Panc1 (cell line): ENCODE measurements at regions of chr1 and their contacts with region 1.

Region 1: GRCh38 chr1:63327417-63328139 is 5.2 kb downstream of the FOXD3 start:
- DNase-seq: peak; percentile 41
- ATAC-seq: peak; percentile 92
- H3K4me3 ChIP-seq: peak overlapping the region in 1 of 2 experiments; percentile 34; a peak in 2 of 4 replicates
- H3K27ac ChIP-seq: no peak overlapping the region
- H3K4me1 ChIP-seq: no peaks in the 10 kb centered on the region
- H3K27me3 ChIP-seq: peaks cover 9% of the 10 kb centered on the region
- CTCF ChIP-seq: peak; percentile 95

Region 2: DNA sequence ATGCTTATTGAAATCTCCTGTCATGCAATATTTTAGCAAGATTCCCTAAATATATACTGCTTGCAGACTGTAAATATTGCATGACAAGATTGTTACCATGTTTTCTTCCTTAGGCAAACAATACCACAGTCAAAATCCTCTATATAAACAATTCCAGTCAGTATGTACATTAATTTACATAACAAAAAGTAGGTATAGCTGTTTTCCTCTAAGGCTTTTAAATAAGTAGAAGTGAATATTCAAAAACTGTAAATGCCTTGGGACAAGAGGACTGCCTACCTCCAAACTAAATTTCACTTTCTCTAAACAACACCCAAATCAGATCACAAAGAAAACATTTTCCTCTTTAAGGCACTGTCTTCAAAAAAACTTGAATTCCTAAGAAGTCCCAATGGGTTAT is 22.5 kb before region 1 on chr1:
- CTCF ChIA-PET with region 1: no interaction called
- POLR2A ChIA-PET with region 1: no interaction called
- in situ Hi-C with region 1: no loop called
- intact Hi-C with region 1: no loop called
- DNase-seq: no peak
- ATAC-seq: no peak
- H3K4me3 ChIP-seq: no peak overlapping the region
- H3K27ac ChIP-seq: no peak overlapping the region
- H3K4me1 ChIP-seq: no peaks in the 10 kb centered on the region
- H3K27me3 ChIP-seq: no peaks in the 10 kb centered on the region
- CTCF ChIP-seq: no peak

Region 3: DNA sequence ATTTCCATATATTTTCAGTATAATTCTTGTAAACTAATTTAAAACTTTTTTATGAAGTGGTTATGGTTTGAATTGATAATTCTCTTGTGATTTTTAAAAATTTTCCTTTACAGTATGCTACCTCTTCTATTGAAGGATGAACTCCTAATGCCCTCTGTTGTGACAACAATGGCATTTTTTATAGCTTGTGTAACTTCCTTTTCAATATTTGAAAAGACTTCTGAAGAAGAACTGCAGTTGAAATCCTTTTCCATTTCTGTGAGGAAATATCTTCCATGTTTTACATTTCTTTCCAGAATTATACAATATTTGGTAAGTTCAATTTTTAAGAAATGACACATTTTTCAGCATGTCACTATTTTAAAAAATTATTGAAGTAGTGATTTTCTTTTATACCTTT is 101.2 kb after region 1 on chr1:
- CTCF ChIA-PET with region 1: no interaction called
- POLR2A ChIA-PET with region 1: no interaction called
- in situ Hi-C with region 1: no loop called
- intact Hi-C with region 1: no loop called
- DNase-seq: no peak
- ATAC-seq: no peak
- H3K4me3 ChIP-seq: no peak overlapping the region
- H3K27ac ChIP-seq: no peak overlapping the region
- H3K4me1 ChIP-seq: no peaks in the 10 kb centered on the region; the same call in 1 of the 2 replicates
- H3K27me3 ChIP-seq: no peaks in the 10 kb centered on the region
- CTCF ChIP-seq: no peak

Region 4: DNA sequence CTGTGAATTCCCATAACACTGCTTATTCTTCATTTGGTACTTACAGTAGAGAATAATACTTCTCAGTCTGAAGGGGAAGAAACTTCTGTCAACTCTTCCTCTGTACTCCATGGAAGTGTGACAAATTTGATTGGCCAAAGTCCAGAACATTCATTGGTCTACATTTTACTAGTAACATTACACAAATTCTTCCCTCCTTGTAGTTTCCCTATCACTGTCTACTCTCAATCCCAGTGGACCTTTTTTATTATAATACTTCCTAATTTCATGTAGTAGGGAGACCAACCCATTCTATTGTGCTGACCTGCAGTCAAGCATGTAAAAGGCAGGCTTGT is 114.5 kb after region 1 on chr1:
- CTCF ChIA-PET with region 1: no interaction called
- POLR2A ChIA-PET with region 1: no interaction called
- in situ Hi-C with region 1: no loop called
- intact Hi-C with region 1: loop called (anchors 5 kb)
- DNase-seq: no peak
- ATAC-seq: 0 out of 2 replicates have a peak, but pooled peaks have one; percentile 37
- H3K4me3 ChIP-seq: no peak overlapping the region
- H3K27ac ChIP-seq: no peak overlapping the region
- H3K4me1 ChIP-seq: no peaks in the 10 kb centered on the region
- H3K27me3 ChIP-seq: no peaks in the 10 kb centered on the region
- CTCF ChIP-seq: no peak

Region 5: GRCh38 chr1:63454269-63454668 is 126.7 kb after region 1 on chr1:
- CTCF ChIA-PET with region 1: no interaction called
- POLR2A ChIA-PET with region 1: no interaction called
- in situ Hi-C with region 1: no loop called
- intact Hi-C with region 1: no loop called
- DNase-seq: no peak
- ATAC-seq: no peak
- H3K4me3 ChIP-seq: no peak overlapping the region
- H3K27ac ChIP-seq: no peak overlapping the region
- H3K4me1 ChIP-seq: no peaks in the 10 kb centered on the region
- H3K27me3 ChIP-seq: no peaks in the 10 kb centered on the region
- CTCF ChIP-seq: peak; percentile 38; the same call in 1 of the 2 replicates

Region 6: DNA sequence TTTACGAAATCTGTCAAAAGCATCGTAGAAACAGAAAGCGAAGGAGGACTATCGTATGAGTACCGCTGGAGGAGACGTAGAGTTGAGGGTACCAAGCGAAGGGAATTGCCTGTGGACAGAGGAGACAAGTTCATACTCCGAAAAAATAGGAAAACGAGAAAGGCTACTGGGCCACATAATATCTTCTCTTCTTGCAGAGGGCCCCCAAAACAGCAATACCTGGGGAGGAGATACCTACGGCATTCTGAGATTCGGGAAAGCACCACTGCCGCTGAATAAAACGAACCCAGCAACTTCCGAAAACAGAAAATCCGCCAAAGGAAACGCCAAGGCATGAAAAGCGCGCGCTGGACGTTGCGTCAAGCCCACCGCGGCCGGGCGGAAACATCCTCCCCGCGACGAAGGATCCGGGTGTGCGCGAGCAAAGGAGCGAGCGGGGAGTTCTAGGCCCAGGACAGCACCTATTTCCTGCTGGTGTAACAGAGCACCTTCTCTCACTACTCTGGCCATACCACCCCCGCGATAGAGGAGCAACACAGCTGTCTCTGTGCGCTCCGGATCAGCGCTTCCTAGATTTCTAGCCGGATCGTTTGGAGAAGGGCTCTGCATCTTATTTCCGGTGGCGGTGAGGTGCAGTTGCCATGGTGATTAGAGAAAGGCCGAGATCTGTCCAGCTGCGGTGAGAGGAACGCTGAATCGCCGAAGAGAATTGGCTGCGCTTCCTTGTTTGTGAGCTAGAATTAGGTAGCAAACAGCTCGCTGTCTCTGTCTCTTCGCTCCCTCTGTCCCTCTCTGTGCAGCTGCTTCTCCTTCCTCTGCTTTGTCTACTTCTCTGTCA is 195.5 kb after region 1 on chr1 and contains the starts of genes EFCAB7 and ITGB3BP:
- CTCF ChIA-PET with region 1: no interaction called
- POLR2A ChIA-PET with region 1: no interaction called
- in situ Hi-C with region 1: no loop called
- intact Hi-C with region 1: loop called (anchors 5 kb)
- DNase-seq: peak; percentile 76
- ATAC-seq: peak; percentile 95
- H3K4me3 ChIP-seq: peak within 1 kb of the TSS; percentile 88 to 92
- H3K27ac ChIP-seq: peak within 1 kb of the TSS; percentile 95
- H3K4me1 ChIP-seq: peaks cover 17% of the 10 kb centered on the region
- H3K27me3 ChIP-seq: no peaks in the 10 kb centered on the region
- CTCF ChIP-seq: no peak
- total RNA-seq, gene EFCAB7: 6.6 TPM
- total RNA-seq, gene ITGB3BP: 31.9 TPM

Region 7: DNA sequence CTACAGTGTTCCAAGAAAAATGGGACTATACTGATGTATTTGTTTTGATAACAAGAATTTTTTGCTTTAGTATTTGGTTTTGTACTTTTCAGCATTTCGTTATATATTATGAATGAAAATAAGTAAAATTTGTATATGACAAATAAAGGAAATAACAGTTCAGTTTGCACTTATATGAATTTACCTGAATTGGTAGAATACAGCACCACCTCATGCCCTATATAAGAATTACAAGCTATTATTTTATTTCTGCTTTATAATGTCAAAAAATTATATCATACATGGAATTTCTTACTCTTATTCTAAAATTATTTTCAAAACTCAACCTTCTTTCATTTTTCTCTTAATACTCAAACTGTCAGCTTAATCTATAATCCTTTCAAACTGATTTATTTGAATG is 210.4 kb after region 1 on chr1:
- CTCF ChIA-PET with region 1: no interaction called
- POLR2A ChIA-PET with region 1: no interaction called
- in situ Hi-C with region 1: no loop called
- intact Hi-C with region 1: loop called (anchors 5 kb)
- DNase-seq: no peak
- ATAC-seq: no peak
- H3K4me3 ChIP-seq: no peak overlapping the region
- H3K27ac ChIP-seq: no peak overlapping the region
- H3K4me1 ChIP-seq: no peaks in the 10 kb centered on the region
- H3K27me3 ChIP-seq: no peaks in the 10 kb centered on the region
- CTCF ChIP-seq: no peak; the same call in 1 of the 2 replicates